ENCODE measurements at regions of chr3 and their contacts with region 1.

Region 1: DNA sequence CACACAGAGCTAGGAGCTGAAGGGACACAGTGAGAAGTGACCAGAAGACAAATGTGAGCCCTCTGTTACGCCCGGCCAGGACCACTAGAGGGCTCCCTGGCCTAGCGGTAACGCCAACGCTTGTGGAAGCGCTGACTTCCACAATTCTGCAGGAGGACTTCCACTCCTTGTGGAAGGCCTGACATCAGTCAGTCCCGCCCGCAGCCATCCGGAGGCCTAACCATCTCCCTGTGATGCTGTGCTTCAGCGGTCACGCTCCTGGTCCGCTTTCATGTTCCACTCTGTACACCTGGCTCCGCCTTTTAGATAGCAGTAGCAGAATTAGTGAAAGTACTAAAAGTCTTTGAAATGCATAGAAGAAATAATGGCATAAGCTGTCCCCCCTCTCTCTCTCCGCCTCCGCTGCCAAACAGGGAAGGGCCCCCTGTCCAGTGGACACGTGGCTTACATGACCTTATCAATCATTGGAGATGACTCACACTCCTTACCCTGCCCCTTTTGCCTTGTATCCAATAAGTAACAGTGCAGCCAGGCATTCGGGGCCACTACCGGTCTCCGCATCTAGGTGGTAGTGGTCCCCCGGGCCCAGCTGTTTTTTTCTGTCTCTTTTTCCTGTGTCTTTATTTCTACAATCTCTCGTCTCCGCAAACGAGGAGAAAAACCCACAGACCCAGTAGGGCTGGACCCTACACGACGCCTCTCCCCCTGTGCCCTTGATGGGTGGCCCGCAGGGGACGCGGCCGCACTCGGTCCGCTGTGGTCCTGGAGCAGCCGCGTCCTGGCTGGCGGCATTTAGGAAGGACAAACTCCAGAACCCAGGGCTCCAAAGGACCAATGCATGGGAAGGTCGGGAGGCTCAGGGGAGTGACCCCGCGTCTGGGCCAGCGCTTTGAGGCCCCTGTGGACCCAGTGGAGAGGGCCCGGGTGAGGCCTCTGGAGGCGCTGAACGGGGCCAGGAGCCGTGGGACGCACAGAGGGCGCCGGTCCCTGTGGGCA is 27.0 kb upstream of the RPL32 start:
- DNase-seq: peak; percentile 78
- H3K4me3 ChIP-seq: no peak overlapping the region
- H3K27ac ChIP-seq: no peak overlapping the region
- H3K4me1 ChIP-seq: no peaks in the 10 kb centered on the region
- H3K27me3 ChIP-seq: no peaks in the 10 kb centered on the region
- CTCF ChIP-seq: peak; percentile 59 to 92 (median 88)
- POLR2A ChIP-seq: no peak

Region 2: GRCh38 chr3:12891985-12892839 is 23.9 kb after region 1 on chr3:
- intact Hi-C with region 1: loop called (anchors 1 kb)
- DNase-seq: peak; percentile 42
- H3K4me3 ChIP-seq: peak overlapping the region in 1 of 2 donors; percentile 12
- H3K27ac ChIP-seq: no peak overlapping the region
- H3K4me1 ChIP-seq: no peaks in the 10 kb centered on the region
- H3K27me3 ChIP-seq: no peaks in the 10 kb centered on the region
- CTCF ChIP-seq: peak; percentile 68 to 88 (median 77)
- POLR2A ChIP-seq: no peak

Region 3: GRCh38 chr3:12984023-12984823 is 115.9 kb after region 1 on chr3:
- intact Hi-C with region 1: loop called (anchors 5 kb)
- DNase-seq: peak; percentile 73
- H3K4me3 ChIP-seq: no peak overlapping the region
- H3K27ac ChIP-seq: no peak overlapping the region
- H3K4me1 ChIP-seq: no peaks in the 10 kb centered on the region
- H3K27me3 ChIP-seq: no peaks in the 10 kb centered on the region
- CTCF ChIP-seq: peak; percentile 43 to 84 (median 72)
- POLR2A ChIP-seq: no peak

Region 4: GRCh38 chr3:12994607-12995388 is 126.5 kb after region 1 on chr3:
- intact Hi-C with region 1: loop called (anchors 5 kb)
- DNase-seq: peak; percentile 82
- H3K4me3 ChIP-seq: peak overlapping the region; percentile 59 to 76
- H3K27ac ChIP-seq: peak overlapping the region; percentile 85 to 86
- H3K4me1 ChIP-seq: no peaks in the 10 kb centered on the region
- H3K27me3 ChIP-seq: no peaks in the 10 kb centered on the region
- CTCF ChIP-seq: peak; percentile 62 to 97 (median 95)
- POLR2A ChIP-seq: peak; percentile 75